GM12878 (cell line): ENCODE measurements at regions of chr11 and their contacts with region 1.

Region 1: DNA sequence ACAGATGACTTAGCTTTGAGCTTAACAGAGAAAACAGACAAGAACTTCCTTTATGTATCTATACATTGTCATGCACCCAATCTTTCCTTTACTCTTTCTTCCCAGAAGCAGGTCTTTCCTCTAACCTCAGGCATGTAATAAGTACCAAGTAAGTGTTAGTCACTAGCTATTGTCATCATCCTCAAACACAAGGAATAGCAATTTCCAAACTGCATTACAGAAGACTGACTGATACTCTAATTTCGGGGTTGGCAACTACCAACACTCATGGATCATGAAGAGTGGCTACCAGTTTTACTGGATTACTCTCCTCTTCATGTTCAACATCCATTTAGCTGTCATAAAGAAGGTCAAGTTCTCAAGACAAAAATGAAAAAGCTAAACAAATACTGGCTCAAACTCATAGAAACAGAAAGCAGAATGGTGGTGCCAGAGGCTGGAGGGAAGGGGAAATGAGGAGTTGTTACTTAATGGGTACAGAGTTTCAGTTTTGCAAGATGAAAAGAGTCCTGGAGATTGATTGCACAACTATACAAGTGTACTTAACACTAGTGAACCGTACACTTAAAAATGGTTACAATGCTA is 111.6 kb downstream of the SIK3 start:
- DNase-seq: peak; percentile 64
- ATAC-seq: peak; percentile 94
- H3K4me3 ChIP-seq: peak overlapping the region; percentile 63
- H3K27ac ChIP-seq: peak overlapping the region; percentile 66; the same call in 1 of the 2 replicates
- H3K4me1 ChIP-seq: peaks cover 27% of the 10 kb centered on the region
- H3K27me3 ChIP-seq: no peaks in the 10 kb centered on the region
- CTCF ChIP-seq: no peak
- EP300 ChIP-seq: no peak
- POLR2A ChIP-seq: no peak
- RAD21 ChIP-seq: no peak

Region 2: DNA sequence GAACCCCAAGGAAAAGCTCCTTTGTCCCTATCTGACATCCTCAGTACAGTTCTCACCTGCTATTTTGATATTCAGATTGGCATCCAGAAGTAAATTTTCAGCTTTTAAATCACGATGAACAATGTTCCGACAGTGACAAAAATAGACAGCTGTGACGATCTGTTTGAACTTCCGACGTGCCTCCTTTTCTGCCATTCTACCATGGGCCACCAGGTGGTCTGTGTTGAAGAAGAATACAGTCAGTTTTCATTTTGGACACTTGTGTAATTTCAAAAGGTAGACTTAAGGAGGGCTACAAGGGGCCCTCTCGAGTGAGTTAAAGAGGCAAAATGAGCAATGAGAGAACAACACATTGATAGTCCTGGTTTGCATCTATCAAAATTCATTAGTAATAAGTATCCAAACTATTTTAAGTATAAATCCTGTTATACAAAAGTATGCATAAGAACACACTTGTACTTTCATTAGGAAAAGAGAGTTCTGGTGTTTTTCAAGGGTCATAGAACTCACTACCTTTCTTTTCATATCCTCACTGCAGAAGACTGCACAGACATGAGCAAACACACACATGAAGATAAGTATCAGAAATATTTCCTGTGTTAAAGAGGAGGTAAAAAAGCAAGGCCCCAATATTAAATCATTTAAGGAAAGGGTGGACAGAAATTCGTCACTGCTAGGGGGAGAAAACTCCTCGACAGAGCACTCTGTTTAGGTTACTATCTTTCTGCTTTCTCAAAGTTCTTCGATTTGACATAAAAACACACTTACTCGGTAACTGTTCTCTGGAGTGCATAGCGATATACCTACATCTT is 59.2 kb before region 1 on chr11:
- CTCF ChIA-PET with region 1: interaction called, 4 read pairs
- POLR2A ChIA-PET with region 1: no interaction called
- RAD21 ChIA-PET with region 1: interaction called, 10 read pairs
- SMC1A ChIA-PET with region 1: interaction called, 6 read pairs
- in situ Hi-C with region 1: no loop called
- intact Hi-C with region 1: no loop called
- DNase-seq: no peak
- ATAC-seq: no peak
- H3K4me3 ChIP-seq: no peak overlapping the region
- H3K27ac ChIP-seq: peak overlapping the region; percentile 26; the same call in 1 of the 2 replicates
- H3K4me1 ChIP-seq: peaks cover 64% of the 10 kb centered on the region
- H3K27me3 ChIP-seq: no peaks in the 10 kb centered on the region
- CTCF ChIP-seq: peak in 2 of 3 experiments; percentile 20 to 39; a peak in 2 of 6 replicates
- EP300 ChIP-seq: no peak
- POLR2A ChIP-seq: no peak
- RAD21 ChIP-seq: peak; percentile 56

Region 3: GRCh38 chr11:116997071-116997470 is 10.5 kb after region 1 on chr11:
- CTCF ChIA-PET with region 1: interaction called, 3 read pairs
- POLR2A ChIA-PET with region 1: interaction called, 10 read pairs
- RAD21 ChIA-PET with region 1: interaction called, 4 read pairs
- SMC1A ChIA-PET with region 1: interaction called, 6 read pairs
- in situ Hi-C with region 1: no loop called
- intact Hi-C with region 1: no loop called
- DNase-seq: no peak
- ATAC-seq: no peak
- H3K4me3 ChIP-seq: no peak overlapping the region
- H3K27ac ChIP-seq: no peak overlapping the region
- H3K4me1 ChIP-seq: no peaks in the 10 kb centered on the region
- H3K27me3 ChIP-seq: no peaks in the 10 kb centered on the region
- CTCF ChIP-seq: no peak
- EP300 ChIP-seq: no peak
- POLR2A ChIP-seq: no peak
- RAD21 ChIP-seq: no peak

Region 4: DNA sequence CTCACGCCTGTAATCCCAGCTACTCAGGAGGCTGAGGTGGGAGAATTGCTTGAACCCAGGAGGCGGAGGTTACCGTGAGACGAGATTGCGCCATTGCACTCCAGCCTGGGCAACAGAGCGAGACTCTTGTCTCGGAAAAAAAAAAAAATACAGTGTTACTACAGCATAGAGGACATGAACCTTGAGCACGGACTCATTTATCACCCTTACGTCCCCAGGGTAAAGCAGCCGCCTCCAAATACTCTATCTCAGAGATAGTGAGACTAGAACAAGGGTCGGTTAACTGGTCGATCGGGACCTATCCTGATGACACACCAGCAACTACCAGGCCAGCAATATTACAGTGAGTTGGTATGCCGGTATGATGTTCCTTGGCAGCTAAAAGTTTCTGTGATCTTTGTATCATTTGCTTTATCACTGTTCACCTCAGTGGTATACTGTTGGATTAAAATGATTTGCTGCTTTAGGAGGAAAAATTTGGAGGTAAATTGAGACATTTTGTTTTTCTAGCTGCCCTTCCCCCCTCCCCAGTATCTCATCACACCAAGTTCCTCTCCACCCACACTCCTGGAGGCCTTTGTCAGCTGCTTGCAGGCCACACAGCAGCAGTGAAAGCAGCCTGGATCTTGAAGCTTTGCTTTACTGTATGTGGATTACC is 184.9 kb after region 1 on chr11:
- CTCF ChIA-PET with region 1: no interaction called
- POLR2A ChIA-PET with region 1: no interaction called
- RAD21 ChIA-PET with region 1: no interaction called
- SMC1A ChIA-PET with region 1: no interaction called
- in situ Hi-C with region 1: no loop called
- intact Hi-C with region 1: no loop called
- DNase-seq: no peak
- ATAC-seq: no peak
- H3K4me3 ChIP-seq: no peak overlapping the region
- H3K27ac ChIP-seq: no peak overlapping the region
- H3K4me1 ChIP-seq: no peaks in the 10 kb centered on the region
- H3K27me3 ChIP-seq: no peaks in the 10 kb centered on the region
- CTCF ChIP-seq: no peak
- EP300 ChIP-seq: no peak
- POLR2A ChIP-seq: 0 out of 2 replicates have a peak, but pooled peaks have one; percentile 43
- RAD21 ChIP-seq: no peak

Region 5: DNA sequence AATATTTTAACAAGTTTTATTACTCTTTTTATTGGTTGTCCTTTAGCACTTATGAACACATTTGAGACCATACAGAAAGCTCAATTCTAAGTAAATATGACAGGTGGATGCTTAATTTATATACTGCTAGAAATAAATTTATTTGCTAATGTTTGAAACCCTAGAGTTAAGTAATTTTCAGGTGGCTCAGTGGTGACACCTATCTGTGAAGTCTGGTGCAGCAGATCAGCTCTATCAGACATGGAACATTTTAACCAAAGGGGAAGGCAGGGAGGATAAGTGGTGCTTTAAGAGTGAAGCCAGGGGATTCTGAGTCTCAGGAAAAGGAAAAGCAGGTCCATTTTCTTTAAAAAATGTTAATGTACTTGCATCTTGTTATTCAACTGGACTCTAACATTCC is 634.6 kb after region 1 on chr11:
- CTCF ChIA-PET with region 1: no interaction called
- POLR2A ChIA-PET with region 1: no interaction called
- RAD21 ChIA-PET with region 1: no interaction called
- SMC1A ChIA-PET with region 1: no interaction called
- in situ Hi-C with region 1: no loop called
- intact Hi-C with region 1: no loop called
- DNase-seq: no peak
- ATAC-seq: peak; percentile 65
- H3K4me3 ChIP-seq: no peak overlapping the region
- H3K27ac ChIP-seq: no peak overlapping the region
- H3K4me1 ChIP-seq: no peaks in the 10 kb centered on the region
- H3K27me3 ChIP-seq: no peaks in the 10 kb centered on the region; a peak in 1 of 4 replicates
- CTCF ChIP-seq: peak; percentile 37 to 68 (median 65)
- EP300 ChIP-seq: no peak
- POLR2A ChIP-seq: no peak
- RAD21 ChIP-seq: peak; percentile 44